BJ (cell line): ENCODE measurements at regions of chr1 and their contacts with region 1.

Region 1: DNA sequence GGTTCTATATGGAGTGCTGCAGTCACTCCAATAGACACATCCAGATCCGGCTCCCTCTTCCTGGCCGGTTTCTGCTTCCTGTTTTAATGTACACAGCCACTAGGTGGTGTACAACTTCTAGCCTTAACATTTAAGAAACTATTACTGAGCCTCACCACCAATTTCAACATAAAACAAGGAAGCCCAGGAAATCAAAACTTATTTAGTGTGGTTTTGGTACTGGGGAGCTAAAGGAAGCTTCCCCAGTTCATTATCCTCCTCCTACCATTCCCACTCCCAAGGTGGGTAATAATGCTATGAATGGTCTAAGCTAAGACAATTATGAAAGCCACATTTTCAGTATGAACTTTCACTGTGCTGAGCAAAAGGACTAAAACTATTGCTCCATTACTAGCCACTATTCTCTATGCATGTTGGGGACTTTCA is 25.5 kb upstream of the MTMR11 start:
- DNase-seq: peak; percentile 26
- H3K4me3 ChIP-seq: no peak overlapping the region
- H3K27me3 ChIP-seq: no peaks in the 10 kb centered on the region
- CTCF ChIP-seq: peak; percentile 60

Region 2: GRCh38 chr1:149978547-149979023 is 16.4 kb after region 1 on chr1:
- CTCF ChIA-PET with region 1: interaction called, 11 read pairs
- POLR2A ChIA-PET with region 1: no interaction called
- DNase-seq: no peak
- H3K4me3 ChIP-seq: no peak overlapping the region
- H3K27me3 ChIP-seq: no peaks in the 10 kb centered on the region
- CTCF ChIP-seq: no peak

Region 3: DNA sequence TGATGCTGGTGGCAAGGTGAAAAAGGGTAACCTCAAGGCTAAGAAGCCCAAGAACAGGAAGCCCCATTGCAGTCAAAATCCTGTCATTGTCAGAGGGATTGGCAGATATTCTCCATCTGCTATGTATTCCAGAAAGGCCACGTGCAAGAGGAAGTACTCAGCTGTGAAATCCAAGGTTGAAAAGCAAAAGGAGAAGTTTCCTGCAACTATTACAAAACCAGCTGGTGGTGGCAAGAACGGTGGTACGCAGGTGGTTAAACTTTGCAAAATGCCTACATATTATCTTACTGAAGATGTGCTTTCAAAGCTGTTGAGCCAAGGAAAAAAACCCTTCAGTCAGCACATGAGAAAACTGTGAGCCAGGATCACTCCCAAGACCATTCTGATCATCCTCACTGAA is 91.8 kb after region 1 on chr1:
- CTCF ChIA-PET with region 1: interaction called, 44 read pairs
- POLR2A ChIA-PET with region 1: no interaction called
- DNase-seq: no peak
- H3K4me3 ChIP-seq: no peak overlapping the region
- H3K27me3 ChIP-seq: no peaks in the 10 kb centered on the region
- CTCF ChIP-seq: no peak

Region 4: DNA sequence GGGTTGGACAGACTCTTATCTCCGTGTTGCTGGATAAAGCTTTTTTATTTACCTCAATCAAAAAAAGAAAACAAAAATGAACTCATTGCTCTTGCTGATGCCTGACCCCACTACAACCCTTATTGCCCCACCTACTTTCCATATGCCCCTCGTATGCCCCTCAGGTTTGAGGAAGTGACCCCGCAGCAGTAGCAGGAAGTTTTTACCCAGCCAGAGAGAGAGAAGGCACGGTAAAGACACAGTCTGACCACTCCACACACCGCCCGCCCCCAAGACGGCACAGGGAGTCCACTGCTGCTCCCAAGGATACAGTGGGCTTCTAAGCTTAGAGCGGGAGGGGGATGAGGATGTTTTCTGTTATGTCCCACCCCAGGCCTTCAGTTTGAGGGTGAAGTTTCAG is 197.4 kb after region 1 on chr1:
- CTCF ChIA-PET with region 1: no interaction called
- POLR2A ChIA-PET with region 1: no interaction called
- DNase-seq: no peak
- H3K4me3 ChIP-seq: no peak overlapping the region
- H3K27me3 ChIP-seq: no peaks in the 10 kb centered on the region
- CTCF ChIP-seq: no peak